ENCODE measurements at regions of chr11 and their contacts with region 1.

Region 1: GRCh38 chr11:33736148-33736809 is at the start of gene CD59:
- DNase-seq: peak; percentile 97
- ATAC-seq: peak; percentile 94 to 95 (median 94)
- H3K4me3 ChIP-seq: peak within 1 kb of the TSS; percentile 96
- H3K27ac ChIP-seq: peak within 1 kb of the TSS; percentile 98
- H3K4me1 ChIP-seq: peaks cover 30% of the 10 kb centered on the region
- H3K27me3 ChIP-seq: no peaks in the 10 kb centered on the region
- CTCF ChIP-seq: no peak
- total RNA-seq, gene CD59: 548 to 930 (median 580) TPM

Region 2: DNA sequence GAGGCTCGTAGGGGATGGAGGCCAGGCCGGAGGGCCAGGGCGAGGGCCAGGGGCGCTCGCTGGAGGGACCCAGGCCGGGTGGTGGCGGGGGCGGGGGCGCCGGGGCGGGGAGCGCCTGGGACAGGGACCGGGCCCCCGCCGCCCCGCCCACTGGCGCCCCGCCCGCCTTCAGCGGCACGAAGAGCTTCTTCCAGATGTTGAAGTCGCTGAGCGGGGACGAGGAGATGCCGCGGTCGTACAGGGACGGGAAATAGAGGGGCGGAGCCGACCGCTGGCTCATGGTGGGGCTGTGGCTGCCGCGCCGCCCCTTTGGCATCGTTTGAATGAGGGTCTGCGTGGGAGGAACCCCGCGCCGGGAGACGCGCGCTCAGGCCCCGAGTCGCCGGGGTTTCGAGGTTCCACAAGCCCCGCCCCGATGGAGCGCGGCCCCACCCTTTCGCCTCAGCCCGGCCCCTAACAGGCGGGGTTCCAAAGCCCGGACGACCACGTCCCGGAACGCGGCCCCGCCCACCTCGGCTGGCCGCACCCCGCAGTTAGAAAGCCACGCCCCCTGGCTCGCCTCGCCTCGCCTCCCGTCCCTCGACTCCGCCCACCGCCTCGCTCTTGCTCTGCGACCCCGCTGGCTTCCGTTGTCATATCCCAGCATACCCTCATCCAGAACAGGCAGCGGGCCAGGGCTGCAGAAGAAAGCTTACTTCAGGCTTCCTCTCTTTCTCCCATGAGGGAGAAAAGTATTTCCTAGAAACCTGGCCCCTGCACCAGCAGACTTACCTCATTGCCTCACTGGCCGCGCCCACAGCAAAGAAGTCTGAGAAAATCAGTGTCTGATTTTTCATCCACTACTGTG is 35.6 kb before region 1 on chr11 and contains the start of gene C11orf91:
- intact Hi-C with region 1: loop called (anchors 5 kb)
- DNase-seq: peak; percentile 96 to 97
- ATAC-seq: peak; percentile 76 to 86 (median 77)
- H3K4me3 ChIP-seq: peak within 1 kb of the TSS; percentile 73
- H3K27ac ChIP-seq: peak within 1 kb of the TSS; percentile 83
- H3K4me1 ChIP-seq: peaks cover 53% of the 10 kb centered on the region
- H3K27me3 ChIP-seq: no peaks in the 10 kb centered on the region
- CTCF ChIP-seq: no peak
- total RNA-seq, gene C11orf91: 0.49 to 0.87 (median 0.53) TPM in 3 of 4 donors, not detected in the other

Region 3: GRCh38 chr11:33716236-33716635 is 20.0 kb before region 1 on chr11:
- intact Hi-C with region 1: loop called (anchors 2 kb)
- DNase-seq: no peak
- ATAC-seq: peak in 3 of 4 donors; percentile 41 to 72 (median 53)
- H3K4me3 ChIP-seq: no peak overlapping the region
- H3K27ac ChIP-seq: peak overlapping the region; percentile 23
- H3K4me1 ChIP-seq: peaks cover 53% of the 10 kb centered on the region
- H3K27me3 ChIP-seq: no peaks in the 10 kb centered on the region
- CTCF ChIP-seq: peak; percentile 55

Measured in psoas muscle (tissue), 8 donors.